ENCODE measurements at regions of chr5 and their contacts with region 1.

Region 1: GRCh38 chr5:98928873-98929696 is at the start of gene CHD1:
- DNase-seq: peak; percentile 84 to 98 (median 94)

Region 2: DNA sequence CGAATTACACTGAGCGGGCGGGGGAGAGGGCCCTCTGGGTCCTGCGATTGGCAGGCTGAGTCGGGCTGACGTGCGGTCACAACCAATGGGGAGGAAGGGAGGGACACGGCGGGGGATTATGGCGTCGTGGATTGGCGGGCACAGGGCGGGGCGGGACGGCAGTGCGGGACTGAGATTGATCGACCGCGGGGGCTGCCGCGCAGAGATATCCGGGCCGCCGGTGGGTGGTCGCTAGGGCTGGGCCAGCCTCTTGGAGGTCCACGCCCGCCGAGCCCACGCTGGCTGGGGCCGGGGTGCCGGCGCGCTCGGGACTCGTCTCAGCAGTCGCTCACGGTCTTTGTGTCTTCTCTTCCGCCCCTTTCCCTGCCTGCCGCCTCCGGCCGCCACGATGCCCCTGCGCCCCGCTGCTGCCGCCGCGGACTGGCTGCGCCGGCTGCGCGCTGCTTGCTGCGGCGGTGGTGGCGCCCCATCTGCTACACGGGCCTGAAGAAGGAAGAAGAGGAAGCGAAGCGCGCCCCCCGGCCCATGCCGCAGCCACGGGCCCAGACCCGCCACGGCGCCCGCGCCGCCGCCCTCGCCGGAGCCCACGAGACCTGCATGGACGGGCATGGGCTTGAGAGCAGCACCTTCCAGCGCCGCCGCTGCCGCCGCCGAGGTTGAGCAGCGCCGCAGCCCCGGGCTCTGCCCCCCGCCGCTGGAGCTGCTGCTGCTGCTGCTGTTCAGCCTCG is 155.5 kb before region 1 on chr5 and contains the start of gene RGMB:
- intact Hi-C with region 1: loop called (anchors 2 kb)
- DNase-seq: peak; percentile 93 to 100 (median 99)

Region 3: GRCh38 chr5:99032234-99033013 is 103.3 kb after region 1 on chr5:
- intact Hi-C with region 1: loop called (anchors 5 kb)
- DNase-seq: peak in 39 of 42 donors; percentile 24 to 85 (median 65)

Measured in head of caudate nucleus (tissue), 42 donors.